PC-9 (cell line): ENCODE measurements at regions of chr11 and their contacts with region 1.

Region 1: DNA sequence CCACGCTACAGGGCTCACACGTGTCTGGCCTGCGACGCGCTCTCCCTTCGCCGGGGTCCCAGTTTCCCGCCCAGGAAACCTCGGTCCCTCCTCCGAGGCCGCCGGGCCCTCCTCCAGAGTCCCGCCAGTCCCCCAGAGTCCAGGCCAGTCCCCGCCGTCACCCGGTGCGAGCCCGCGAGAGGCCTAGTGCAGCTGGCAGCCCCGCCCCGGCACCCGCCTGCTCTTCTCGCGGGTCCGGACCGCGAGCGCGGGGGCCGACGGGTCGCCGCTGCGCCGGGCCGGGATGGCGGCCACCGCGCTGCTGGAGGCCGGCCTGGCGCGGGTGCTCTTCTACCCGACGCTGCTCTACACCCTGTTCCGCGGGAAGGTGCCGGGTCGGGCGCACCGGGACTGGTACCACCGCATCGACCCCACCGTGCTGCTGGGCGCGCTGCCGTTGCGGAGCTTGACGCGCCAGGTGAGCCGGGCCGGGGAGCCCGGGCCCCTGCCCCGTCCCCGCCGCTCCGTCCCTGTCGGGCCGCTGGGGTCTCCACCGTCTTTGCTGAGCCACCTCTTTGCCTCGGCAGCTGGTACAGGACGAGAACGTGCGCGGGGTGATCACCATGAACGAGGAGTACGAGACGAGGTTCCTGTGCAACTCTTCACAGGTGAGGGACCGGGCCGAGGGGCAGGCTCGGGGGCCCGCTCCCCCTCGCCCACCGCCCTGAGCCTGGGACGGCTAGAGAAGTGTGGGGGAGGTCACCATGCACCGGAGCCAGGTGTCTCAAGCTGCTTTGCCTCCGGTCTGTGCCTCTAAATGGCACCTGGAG is at the start of gene PTPMT1:
- DNase-seq: peak; percentile 70 to 79
- H3K4me3 ChIP-seq: peak within 1 kb of the TSS; percentile 95
- H3K27ac ChIP-seq: peak within 1 kb of the TSS; percentile 55
- H3K4me1 ChIP-seq: peaks cover 11% of the 10 kb centered on the region
- H3K27me3 ChIP-seq: no peaks in the 10 kb centered on the region
- CTCF ChIP-seq: no peak
- total RNA-seq, gene PTPMT1: 74.8 and 79.0 TPM in 2 replicates

Region 2: DNA sequence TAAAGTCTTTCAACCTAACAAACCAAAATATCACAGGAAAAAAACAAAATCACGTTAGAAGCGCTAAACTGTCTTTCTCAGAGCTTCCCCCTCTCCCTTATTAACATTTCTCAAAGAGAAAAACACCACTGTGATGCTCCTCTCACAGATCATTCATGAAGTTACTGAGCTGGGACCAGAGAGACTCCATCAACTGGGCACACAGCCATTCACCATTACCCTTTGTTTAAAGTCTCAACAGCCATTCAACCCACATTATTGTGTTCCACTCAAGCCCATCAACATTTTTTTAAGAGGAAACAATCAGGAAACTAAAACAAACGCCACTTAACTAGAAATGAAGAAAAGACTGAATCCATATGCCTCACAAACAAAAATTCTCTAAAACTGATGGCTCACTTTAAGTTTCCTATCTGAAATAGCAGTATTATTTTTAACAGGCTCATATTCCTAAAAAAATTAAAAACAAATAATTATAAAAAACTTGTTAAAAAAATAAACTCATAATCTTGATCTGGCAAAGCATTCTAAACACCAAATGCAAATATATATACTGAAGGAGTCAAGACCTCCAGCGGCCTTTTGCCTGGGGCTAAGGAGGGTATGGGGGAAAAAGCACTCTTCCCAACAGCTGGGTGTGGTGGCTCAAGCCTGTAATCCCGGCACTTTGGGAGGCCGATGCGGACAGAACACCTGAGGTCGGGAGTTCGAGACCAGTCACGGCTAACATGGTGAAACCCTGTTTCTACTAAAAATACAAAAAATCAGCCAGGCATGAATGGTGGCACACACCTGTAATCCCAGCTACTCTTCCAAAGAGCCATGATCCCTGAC is 26.6 kb before region 1 on chr11:
- CTCF ChIA-PET with region 1: no interaction called
- POLR2A ChIA-PET with region 1: interaction called, 10 read pairs
- intact Hi-C with region 1: no loop called
- DNase-seq: no peak
- H3K4me3 ChIP-seq: no peak overlapping the region
- H3K27ac ChIP-seq: peak overlapping the region; percentile 63
- H3K4me1 ChIP-seq: peaks cover 34% of the 10 kb centered on the region
- H3K27me3 ChIP-seq: no peaks in the 10 kb centered on the region
- CTCF ChIP-seq: no peak

Region 3: DNA sequence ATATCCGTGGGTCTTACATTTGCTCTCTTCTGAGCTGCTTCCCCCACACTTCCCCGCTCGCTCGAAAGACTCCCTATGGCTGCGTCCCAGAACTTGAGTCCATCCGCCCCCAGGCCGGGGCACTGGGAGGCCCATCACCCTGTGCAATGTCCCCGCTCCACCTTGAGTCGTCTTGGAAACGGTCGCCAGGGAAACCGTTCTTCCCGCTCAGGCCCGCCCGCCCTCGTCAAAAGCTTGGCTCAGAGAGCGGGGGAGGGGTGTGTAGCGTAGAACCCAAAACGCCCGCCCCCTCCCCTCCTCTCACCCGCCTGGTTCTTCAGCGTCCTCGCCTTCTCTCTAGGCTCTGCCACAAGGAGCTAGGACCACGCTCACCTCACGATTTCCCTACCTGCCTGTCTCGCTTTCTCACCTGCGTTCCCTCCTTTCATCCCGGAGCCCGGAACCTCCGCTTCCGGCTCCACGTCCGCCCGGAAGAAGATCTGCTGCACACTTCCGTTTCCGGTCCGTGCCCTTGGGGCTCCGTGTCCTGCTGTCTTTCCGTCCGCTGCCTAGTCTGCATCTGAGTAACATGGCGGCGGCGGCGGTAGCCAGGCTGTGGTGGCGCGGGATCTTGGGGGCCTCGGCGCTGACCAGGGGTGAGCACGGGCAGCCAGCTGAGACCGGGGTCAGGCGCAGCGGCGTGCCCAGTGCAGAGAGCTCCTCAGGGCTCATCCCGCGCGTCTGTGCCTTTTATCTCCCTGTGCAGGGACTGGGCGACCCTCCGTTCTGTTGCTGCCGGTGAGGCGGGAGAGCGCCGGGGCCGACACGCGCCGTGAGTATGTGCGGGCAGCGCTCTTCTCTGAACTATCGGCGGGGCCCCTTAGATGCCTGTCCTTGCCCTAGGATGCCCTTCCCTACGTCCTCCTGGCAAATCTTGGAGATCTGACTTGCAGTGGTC is 13.2 kb after region 1 on chr11 and contains the starts of genes KBTBD4 and NDUFS3:
- CTCF ChIA-PET with region 1: no interaction called
- POLR2A ChIA-PET with region 1: interaction called, 14 read pairs
- intact Hi-C with region 1: no loop called
- DNase-seq: peak; percentile 79 to 89
- H3K4me3 ChIP-seq: peak within 1 kb of the TSS; percentile 80
- H3K27ac ChIP-seq: peak within 1 kb of the TSS; percentile 45; the same call in 1 of the 2 replicates
- H3K4me1 ChIP-seq: peaks cover 12% of the 10 kb centered on the region
- H3K27me3 ChIP-seq: no peaks in the 10 kb centered on the region
- CTCF ChIP-seq: no peak
- total RNA-seq, gene KBTBD4: 20.2 and 20.3 TPM in 2 replicates
- total RNA-seq, gene NDUFS3: 119 and 140 TPM in 2 replicates

Region 4: GRCh38 chr11:47847892-47848635 is 282.5 kb after region 1 on chr11 and contains the start of gene NUP160:
- CTCF ChIA-PET with region 1: no interaction called
- POLR2A ChIA-PET with region 1: no interaction called
- intact Hi-C with region 1: no loop called
- DNase-seq: peak; percentile 60 to 84
- H3K4me3 ChIP-seq: peak within 1 kb of the TSS; percentile 96
- H3K27ac ChIP-seq: peak within 1 kb of the TSS; percentile 72
- H3K4me1 ChIP-seq: peaks cover 16% of the 10 kb centered on the region
- H3K27me3 ChIP-seq: no peaks in the 10 kb centered on the region
- CTCF ChIP-seq: no peak
- total RNA-seq, gene NUP160: 61.7 and 73.2 TPM in 2 replicates